BJ (cell line): ENCODE measurements at regions of chr2 and their contacts with region 1.

Region 1: DNA sequence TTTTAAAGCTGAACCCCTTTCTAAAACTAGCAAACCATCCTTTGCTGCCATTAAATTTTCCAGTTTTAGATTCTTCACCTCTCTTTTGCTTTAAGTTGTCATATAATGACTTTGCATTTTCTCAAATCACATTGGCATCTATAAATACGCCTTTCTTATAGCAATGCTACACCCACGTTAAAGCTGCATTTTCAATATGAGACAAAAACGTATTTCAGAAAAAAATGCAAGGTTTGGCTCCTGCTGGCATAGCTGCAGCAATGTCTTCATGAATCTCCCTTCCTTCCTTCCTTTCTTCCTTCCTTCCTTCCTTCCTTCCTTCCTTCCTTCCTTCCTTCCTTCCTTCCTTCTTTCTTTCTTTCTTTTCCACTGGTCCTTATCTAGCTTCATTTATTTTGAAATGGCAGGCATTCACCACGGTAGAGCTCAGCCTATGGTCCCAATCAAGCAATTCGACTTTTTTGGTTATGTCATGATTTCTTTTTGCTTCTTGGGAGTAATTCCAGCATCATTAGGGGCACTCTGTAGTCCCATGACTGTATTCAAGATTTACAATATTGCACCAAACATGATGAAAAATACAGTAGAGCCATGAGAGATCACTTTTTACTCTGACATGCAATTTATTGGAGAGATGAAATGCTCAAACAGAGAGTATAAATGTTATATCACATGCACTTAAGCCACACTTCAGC is 8.8 kb upstream of the UGT1A10 start:
- DNase-seq: no peak
- H3K4me3 ChIP-seq: no peak overlapping the region
- H3K27me3 ChIP-seq: no peaks in the 10 kb centered on the region
- CTCF ChIP-seq: no peak

Region 2: DNA sequence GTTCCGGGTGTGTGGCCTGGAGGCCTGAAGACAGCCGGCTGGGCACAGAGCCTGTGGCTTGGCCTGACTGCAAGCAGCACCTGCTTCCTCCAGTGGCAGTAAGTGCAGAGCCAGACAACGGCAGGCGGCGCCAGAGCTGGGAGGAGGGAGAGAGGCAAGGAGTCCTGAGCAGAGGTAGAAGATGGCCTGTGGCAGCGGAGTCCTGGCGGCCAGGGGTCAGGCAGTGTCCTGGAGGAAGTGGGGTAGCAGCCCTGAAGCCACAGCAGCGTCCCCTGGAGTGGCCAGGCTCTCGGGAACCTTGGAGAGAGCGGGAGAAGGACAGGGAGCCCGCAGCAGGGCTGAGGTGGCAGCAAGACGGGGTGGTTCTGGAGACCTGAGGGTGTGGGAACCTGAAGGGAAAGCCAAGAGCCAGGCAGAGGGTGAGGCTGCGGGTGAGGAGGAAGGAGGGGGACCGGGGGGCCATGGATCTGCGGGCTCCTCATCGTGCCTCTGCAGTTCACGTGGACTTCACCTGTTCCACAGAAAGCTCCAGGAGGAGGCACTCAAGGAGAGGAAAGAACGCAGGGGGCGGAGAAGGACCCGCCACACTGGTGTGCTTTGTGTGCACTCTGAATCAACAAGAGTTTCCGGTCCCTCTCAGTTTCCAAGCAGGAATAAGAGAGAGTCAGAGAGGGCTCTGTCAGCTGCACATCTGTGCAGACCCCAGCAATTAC is 146.8 kb before region 1 on chr2:
- CTCF ChIA-PET with region 1: no interaction called
- POLR2A ChIA-PET with region 1: no interaction called
- DNase-seq: no peak
- H3K4me3 ChIP-seq: no peak overlapping the region
- H3K27me3 ChIP-seq: no peaks in the 10 kb centered on the region
- CTCF ChIP-seq: no peak

Region 3: GRCh38 chr2:233566141-233566960 is 61.1 kb before region 1 on chr2 and contains the start of gene USP40:
- CTCF ChIA-PET with region 1: no interaction called
- POLR2A ChIA-PET with region 1: interaction called, 12 read pairs
- DNase-seq: peak; percentile 48
- H3K4me3 ChIP-seq: peak within 1 kb of the TSS; percentile 98
- H3K27me3 ChIP-seq: 0 out of 2 replicates have a peak, but pooled peaks cover 2% of the 10 kb centered on the region
- CTCF ChIP-seq: no peak
- polyA plus RNA-seq, gene USP40: 29.1 and 48.9 TPM in 2 replicates